BJ (cell line): ENCODE measurements at regions of chr2 and their contacts with region 1.

Region 1: GRCh38 chr2:237572021-237572741 is 5.8 kb downstream of the PRLH start:
- DNase-seq: peak; percentile 34
- H3K4me3 ChIP-seq: no peak overlapping the region
- H3K27me3 ChIP-seq: no peaks in the 10 kb centered on the region
- CTCF ChIP-seq: peak; percentile 99

Region 2: GRCh38 chr2:237122214-237122666 is 449.9 kb before region 1 on chr2:
- CTCF ChIA-PET with region 1: interaction called, 39 read pairs
- POLR2A ChIA-PET with region 1: no interaction called
- DNase-seq: no peak
- H3K4me3 ChIP-seq: no peak overlapping the region
- H3K27me3 ChIP-seq: no peaks in the 10 kb centered on the region
- CTCF ChIP-seq: peak; percentile 84

Region 3: GRCh38 chr2:237421542-237422116 is 150.6 kb before region 1 on chr2:
- CTCF ChIA-PET with region 1: interaction called, 26 read pairs
- POLR2A ChIA-PET with region 1: no interaction called
- DNase-seq: no peak
- H3K4me3 ChIP-seq: no peak overlapping the region
- H3K27me3 ChIP-seq: no peaks in the 10 kb centered on the region
- CTCF ChIP-seq: peak; percentile 95

Region 4: DNA sequence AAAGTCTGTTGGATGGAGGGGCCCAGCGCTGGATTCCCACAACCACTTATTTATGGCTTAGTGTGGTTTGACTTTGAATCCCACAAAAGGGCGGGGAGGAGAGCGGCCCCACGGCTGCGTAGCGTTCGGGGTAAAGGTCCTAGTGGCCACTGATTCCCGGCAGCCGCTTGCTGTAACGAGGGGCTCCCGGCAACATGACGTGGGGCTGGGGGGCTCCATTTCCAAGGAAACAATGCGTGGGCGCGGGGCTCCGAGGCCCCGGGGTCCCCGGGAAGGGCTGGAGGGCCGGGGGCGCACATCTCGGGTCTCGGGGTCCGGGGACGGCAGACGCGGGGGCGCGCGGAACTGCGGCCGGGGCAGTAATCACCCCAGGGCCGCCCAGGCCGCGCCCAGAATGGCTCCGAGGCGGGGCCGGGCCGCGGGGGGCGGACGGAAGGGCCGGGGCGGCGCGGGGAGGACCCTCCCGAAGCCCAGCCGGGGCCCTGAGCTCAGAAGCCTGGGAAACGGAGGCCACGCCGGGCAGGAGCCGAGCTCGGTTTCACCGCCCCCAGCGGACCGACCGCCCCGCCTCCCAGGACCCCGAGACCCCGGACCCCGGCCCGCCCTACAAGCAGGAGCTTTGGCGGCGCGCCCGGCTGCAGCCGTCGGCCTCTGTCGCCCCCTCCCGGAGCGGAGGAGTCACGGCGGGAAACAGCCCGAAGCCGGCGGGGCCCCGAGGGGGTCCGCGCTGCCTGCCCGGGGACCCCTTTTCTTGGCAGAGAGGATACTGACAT is 97.1 kb before region 1 on chr2:
- CTCF ChIA-PET with region 1: interaction called, 40 read pairs
- POLR2A ChIA-PET with region 1: no interaction called
- DNase-seq: no peak
- H3K4me3 ChIP-seq: peak overlapping the region; percentile 50
- H3K27me3 ChIP-seq: no peaks in the 10 kb centered on the region
- CTCF ChIP-seq: peak; percentile 78

Region 5: DNA sequence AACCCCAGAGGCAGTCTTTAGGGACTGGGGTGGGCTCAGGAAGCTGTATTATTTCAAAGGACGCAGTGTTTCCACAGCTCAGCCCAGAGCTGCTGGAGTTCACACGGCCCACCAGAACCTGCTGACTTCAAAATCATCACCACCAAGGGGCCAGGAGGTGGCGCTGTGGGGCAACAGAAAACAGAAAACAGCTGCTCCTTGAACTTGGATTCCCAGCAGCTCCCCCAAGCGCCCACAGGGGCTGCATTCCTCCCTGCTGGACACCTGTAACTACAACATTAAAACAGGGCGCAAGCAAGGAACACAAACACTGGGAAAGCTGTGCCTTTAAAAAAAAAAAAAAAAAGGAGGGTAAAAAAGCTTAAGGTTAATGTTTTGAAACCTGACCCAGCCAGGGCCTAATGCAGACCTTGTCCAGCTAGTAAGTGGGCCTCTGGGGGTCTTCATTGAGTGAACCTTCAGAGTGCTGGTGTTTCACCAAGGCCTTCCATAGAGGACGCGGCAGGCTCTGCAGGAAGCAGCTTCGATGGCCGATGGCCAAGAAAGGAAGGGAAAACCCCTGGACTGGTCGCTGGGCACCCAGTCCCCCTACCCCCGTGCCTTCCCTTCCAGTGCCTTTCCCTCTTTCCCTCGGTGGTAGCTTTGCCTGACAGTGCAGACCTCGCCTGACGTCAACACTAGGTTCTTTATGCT is 59.3 kb before region 1 on chr2:
- CTCF ChIA-PET with region 1: interaction called, 111 read pairs
- POLR2A ChIA-PET with region 1: no interaction called
- DNase-seq: peak; percentile 32
- H3K4me3 ChIP-seq: no peak overlapping the region
- H3K27me3 ChIP-seq: no peaks in the 10 kb centered on the region
- CTCF ChIP-seq: peak; percentile 87

Region 6: DNA sequence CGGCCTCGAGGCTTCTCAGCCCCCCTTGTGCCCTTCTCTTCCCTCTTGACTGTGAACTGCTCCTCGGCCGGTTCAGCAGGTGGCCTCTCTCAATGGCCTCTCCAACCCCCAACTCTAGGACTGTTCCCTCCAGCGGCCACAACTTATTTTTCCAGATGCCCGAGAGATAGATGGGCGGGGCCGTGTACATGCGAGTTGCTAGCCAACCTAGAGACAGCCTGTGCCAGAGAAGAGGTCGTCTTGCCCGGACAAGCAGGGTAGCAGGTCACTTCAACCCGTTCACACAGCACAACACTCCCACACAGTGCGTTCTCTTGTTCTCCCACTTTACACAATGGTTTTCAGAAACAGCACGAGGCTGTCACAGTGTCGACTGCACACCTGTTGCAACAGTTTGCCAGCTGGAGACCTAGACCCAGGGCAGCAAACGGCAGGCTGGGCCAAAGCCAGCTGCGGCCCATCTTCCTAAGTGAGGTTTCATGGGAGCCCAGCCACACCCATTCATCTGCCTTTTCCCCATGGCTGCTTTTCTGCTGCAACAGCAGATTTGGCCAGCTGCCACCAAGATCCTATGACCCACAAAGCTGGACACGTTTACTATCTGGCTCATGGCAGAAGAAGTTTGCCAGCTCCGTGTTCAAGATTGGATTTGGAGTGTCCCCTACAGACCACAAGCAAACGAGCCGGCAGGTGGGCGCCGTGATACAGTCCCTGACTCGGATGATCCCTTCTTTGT is 13.1 kb before region 1 on chr2:
- CTCF ChIA-PET with region 1: interaction called, 31 read pairs
- POLR2A ChIA-PET with region 1: no interaction called
- DNase-seq: peak; percentile 74
- H3K4me3 ChIP-seq: no peak overlapping the region
- H3K27me3 ChIP-seq: no peaks in the 10 kb centered on the region; the same call in 1 of the 2 replicates
- CTCF ChIP-seq: peak; percentile 32

Region 7: GRCh38 chr2:237712477-237713377 is 140.5 kb after region 1 on chr2:
- CTCF ChIA-PET with region 1: no interaction called
- POLR2A ChIA-PET with region 1: no interaction called
- DNase-seq: no peak
- H3K4me3 ChIP-seq: no peak overlapping the region
- H3K27me3 ChIP-seq: no peaks in the 10 kb centered on the region
- CTCF ChIP-seq: no peak

Region 8: GRCh38 chr2:237723602-237724001 is 151.4 kb after region 1 on chr2:
- CTCF ChIA-PET with region 1: no interaction called
- POLR2A ChIA-PET with region 1: no interaction called
- DNase-seq: no peak
- H3K4me3 ChIP-seq: no peak overlapping the region
- H3K27me3 ChIP-seq: no peaks in the 10 kb centered on the region
- CTCF ChIP-seq: peak; percentile 24; the same call in 1 of the 2 replicates

Region 9: GRCh38 chr2:238081150-238081549 is 509.0 kb after region 1 on chr2:
- CTCF ChIA-PET with region 1: no interaction called
- POLR2A ChIA-PET with region 1: no interaction called
- DNase-seq: no peak
- H3K4me3 ChIP-seq: no peak overlapping the region
- H3K27me3 ChIP-seq: no peaks in the 10 kb centered on the region
- CTCF ChIP-seq: no peak